Cardiac septum (tissue), 1 donor: ENCODE measurements at regions of chr10 and their contacts with region 1.

Region 1: GRCh38 chr10:78407009-78407711 is 373.5 kb downstream of the RPS24 start:
- DNase-seq: peak; percentile 86

Region 2: GRCh38 chr10:78047314-78047891 is 359.8 kb before region 1 on chr10:
- intact Hi-C with region 1: loop called (anchors 10 kb)
- DNase-seq: peak; percentile 90

Region 3: DNA sequence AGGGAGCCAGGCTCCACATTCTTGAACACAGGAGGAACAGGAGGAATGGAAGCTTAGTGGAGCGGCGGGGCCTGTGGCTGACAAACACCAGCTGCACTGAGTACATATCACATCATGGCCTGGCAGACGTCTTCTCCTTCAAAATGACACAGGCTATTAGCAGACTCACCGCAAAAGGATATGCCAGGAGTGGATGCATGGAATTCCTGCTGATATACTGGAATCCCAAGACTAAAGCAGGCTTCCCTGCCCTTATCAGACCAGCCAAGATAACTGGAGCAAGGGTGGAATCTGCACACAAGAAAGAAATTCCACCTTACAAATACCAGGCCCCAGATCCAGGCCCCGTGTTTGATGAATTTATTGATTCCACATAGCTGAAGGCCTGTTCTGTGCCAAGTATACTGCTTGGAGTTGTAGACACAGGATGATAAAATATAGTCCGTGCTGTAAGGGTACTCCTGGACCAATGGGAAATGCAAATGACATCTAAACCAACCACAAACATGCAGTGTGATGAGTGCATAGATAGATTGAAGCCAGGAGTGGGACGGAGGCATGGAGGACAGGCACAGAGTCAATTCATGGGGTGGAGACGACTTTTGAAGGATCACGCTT is 181.1 kb after region 1 on chr10:
- intact Hi-C with region 1: loop called (anchors 5 kb)
- DNase-seq: no peak